ENCODE measurements at regions of chr3 and their contacts with region 1.

Region 1: GRCh38 chr3:48556793-48557626 is at the start of gene PFKFB4:
- DNase-seq: peak; percentile 100
- H3K4me3 Mint-ChIP-seq: peak within 1 kb of the TSS; percentile 84
- H3K27ac Mint-ChIP-seq: peak within 1 kb of the TSS; percentile 50
- H3K4me1 Mint-ChIP-seq: peaks cover 11% of the 10 kb centered on the region
- H3K27me3 Mint-ChIP-seq: no peaks in the 10 kb centered on the region
- total RNA-seq, gene PFKFB4: 5.1 to 5.4 TPM

Region 2: DNA sequence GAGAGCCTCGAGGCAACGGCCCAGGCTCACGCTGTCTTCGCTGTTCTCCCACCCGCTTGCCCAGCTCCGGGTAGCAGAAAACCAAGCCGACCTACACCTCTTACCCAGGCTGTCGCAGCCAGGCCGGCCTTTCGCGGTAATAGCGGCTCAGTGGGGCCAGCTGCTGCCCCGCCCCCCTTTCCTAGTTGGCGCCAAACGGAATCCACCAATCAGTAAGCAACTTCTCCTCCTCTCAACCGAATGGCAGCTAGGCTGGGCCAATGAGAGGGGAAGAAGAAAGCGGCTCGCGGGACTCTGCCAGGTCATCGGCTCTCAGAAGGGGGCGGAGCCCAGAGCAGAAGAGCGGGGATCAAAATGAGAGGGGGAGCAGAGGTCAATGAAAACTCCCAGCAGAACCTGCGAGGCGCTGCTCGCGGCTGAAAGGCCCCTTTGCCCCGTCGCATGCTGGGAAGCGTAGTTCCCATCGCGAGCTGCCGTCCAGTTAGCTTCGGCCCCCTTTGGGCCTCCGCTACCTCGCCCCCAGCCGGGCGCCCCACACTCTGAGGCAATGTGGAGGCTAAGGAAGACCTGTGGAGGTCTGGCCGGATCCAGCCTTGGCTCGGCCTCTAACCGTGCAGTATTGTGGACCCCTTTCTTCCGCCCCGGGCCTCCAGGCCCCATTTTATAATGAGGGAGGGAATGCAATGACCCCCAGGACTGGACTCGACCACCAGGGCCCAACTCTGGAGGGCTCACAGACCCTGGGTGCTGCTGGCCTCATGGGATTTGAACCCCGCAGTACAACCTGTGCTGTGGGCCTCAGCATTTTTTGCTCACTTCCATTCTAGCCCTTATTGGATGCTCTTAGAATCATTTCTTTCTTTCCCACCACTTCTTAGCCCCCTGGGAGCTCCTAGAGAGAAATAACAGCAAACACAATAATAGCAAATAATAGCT is 368.5 kb before region 1 on chr3 and contains the start of gene CDC25A:
- CTCF ChIA-PET with region 1: no interaction called
- intact Hi-C with region 1: loop called (anchors 1 kb)
- DNase-seq: peak; percentile 98
- H3K4me3 Mint-ChIP-seq: peak within 1 kb of the TSS; percentile 88
- H3K27ac Mint-ChIP-seq: peak within 1 kb of the TSS; percentile 61
- H3K4me1 Mint-ChIP-seq: peaks cover 17% of the 10 kb centered on the region
- H3K27me3 Mint-ChIP-seq: peaks cover 11% of the 10 kb centered on the region
- total RNA-seq, gene CDC25A: 40.8 to 41.8 TPM

Region 3: DNA sequence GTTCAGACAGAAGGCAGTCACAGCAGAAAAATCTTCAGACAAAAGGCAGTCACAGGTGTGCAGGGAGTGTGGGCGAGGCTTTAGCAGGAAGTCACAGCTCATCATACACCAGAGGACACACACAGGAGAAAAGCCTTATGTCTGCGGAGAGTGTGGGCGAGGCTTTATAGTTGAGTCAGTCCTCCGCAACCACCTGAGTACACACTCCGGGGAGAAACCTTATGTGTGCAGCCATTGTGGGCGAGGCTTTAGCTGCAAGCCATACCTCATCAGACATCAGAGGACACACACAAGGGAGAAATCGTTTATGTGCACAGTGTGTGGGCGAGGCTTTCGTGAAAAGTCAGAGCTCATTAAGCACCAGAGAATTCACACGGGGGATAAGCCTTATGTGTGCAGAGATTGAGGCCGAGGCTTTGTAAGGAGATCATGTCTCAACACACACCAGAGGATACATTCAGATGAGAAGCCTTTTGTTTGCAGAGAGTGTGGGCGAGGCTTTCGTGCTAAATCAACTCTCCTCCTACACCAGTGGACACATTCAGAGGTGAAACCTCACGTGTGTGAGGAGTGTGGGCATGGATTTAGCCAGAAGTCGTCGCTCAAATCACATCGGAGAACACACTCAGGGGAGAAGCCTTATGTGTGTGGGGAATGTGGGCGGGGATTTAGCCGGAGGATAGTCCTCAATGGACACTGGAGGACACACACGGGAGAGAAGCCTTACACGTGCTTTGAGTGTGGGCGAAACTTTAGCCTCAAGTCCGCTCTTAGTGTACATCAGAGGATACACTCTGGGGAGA is 288.4 kb before region 1 on chr3:
- CTCF ChIA-PET with region 1: interaction called, 3 read pairs
- intact Hi-C with region 1: loop called (anchors 2 kb)
- DNase-seq: peak; percentile 96
- H3K4me3 Mint-ChIP-seq: peak overlapping the region; percentile 37
- H3K27ac Mint-ChIP-seq: peak overlapping the region; percentile 88
- H3K4me1 Mint-ChIP-seq: peaks cover 32% of the 10 kb centered on the region
- H3K27me3 Mint-ChIP-seq: no peaks in the 10 kb centered on the region

Region 4: GRCh38 chr3:48439820-48440589 is 117.0 kb before region 1 on chr3 and contains the starts of genes CCDC51 and TMA7:
- CTCF ChIA-PET with region 1: interaction called, 72 read pairs
- intact Hi-C with region 1: loop called (anchors 2 kb)
- DNase-seq: peak; percentile 100
- H3K4me3 Mint-ChIP-seq: peak within 1 kb of the TSS; percentile 93
- H3K27ac Mint-ChIP-seq: peak within 1 kb of the TSS; percentile 96
- H3K4me1 Mint-ChIP-seq: peaks cover 44% of the 10 kb centered on the region
- H3K27me3 Mint-ChIP-seq: no peaks in the 10 kb centered on the region
- total RNA-seq, gene CCDC51: 16.4 to 17.4 TPM
- total RNA-seq, gene TMA7: 319 to 353 TPM

Region 5: DNA sequence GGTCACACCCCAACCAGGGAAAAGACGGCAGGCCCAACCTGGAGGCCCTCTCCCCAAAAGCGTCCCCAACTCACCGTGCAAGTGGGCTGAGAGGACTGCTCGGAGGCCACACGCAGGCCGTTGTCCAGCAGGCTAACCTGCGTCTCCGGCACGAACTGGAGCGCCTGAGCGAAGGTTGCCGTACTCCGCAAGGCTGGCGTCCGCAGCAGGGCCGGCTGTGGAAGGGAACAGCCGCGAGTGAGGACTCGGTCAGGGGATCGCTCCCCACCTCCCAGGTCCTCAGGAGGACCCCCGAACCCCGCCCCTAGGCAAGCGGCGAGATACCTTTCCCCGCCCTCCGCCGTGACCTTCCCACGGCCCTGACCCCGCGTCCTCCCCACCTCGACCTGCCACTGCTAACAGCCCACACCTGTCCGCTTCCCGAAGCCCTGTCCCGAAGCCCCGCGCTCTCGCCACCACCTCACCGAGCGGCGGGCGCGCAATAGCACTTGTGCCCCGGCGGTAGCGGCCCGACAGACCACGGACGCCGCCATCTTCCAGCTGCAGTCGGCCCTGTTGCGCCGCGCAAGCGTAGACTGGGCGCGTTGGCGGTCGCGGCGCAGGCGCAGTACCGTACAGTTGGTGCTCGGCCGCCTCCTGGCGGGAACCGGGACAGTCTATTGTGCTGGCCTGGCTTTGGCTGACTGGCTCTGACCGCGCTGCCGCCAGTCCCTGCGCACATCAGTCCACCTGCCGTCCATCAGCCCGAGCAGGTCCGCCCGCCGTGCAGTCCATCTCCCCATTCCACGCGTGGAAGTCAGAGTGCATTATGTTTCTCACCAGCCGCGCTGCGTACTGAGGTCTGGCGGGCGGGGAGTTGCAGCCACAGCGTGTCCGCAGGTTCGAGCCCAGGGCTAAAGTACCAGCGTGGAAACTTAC is 52.3 kb after region 1 on chr3 and contains the start of gene UQCRC1:
- CTCF ChIA-PET with region 1: no interaction called
- intact Hi-C with region 1: loop called (anchors 2 kb)
- DNase-seq: peak; percentile 94
- H3K4me3 Mint-ChIP-seq: peak within 1 kb of the TSS; percentile 99
- H3K27ac Mint-ChIP-seq: peak within 1 kb of the TSS; percentile 92
- H3K4me1 Mint-ChIP-seq: peaks cover 23% of the 10 kb centered on the region
- H3K27me3 Mint-ChIP-seq: no peaks in the 10 kb centered on the region
- total RNA-seq, gene UQCRC1: 211 to 232 TPM

Region 6: GRCh38 chr3:48663415-48664312 is 106.7 kb after region 1 on chr3:
- CTCF ChIA-PET with region 1: no interaction called
- intact Hi-C with region 1: loop called (anchors 2 kb)
- DNase-seq: peak; percentile 94
- H3K4me3 Mint-ChIP-seq: peak overlapping the region; percentile 84
- H3K27ac Mint-ChIP-seq: peak overlapping the region; percentile 61
- H3K4me1 Mint-ChIP-seq: peaks cover 17% of the 10 kb centered on the region
- H3K27me3 Mint-ChIP-seq: peaks cover 35% of the 10 kb centered on the region

Region 7: DNA sequence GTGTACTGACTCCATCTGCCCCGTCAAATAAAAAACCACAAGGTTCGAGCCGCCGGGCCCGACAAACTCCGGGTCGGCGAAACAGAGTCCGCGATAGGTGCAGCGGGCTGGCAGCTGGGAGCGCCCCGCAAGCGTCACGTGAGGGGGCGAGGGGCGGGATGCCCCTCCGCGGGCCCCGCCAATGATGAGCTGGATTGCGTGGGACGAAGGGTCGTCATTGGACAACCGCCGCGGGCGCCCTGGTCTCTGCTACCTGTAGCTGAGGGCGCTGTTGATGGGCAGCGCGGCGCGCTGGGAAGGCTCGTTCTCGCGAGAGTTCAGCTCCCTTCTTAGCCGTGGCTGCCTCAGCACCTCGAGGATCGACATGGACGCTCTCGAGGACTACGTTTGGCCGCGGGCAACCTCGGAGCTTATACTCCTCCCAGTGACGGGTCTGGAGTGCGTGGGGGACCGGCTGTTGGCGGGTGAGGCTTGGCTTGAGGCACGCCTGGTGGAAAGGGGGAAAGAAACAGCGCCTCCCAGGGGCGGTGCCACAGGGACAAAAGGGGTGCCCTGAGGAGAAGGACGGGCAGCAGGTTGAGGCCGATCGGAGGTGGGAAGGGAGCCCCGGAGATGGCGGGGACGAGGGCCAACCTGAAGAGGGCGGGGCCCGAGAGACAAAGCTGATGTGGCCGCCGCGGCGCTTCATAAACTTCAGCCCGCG is 450.2 kb after region 1 on chr3 and contains the start of gene WDR6:
- CTCF ChIA-PET with region 1: no interaction called
- intact Hi-C with region 1: loop called (anchors 5 kb)
- DNase-seq: peak; percentile 99
- H3K4me3 Mint-ChIP-seq: peak within 1 kb of the TSS; percentile 99
- H3K27ac Mint-ChIP-seq: peak within 1 kb of the TSS; percentile 99
- H3K4me1 Mint-ChIP-seq: peaks cover 19% of the 10 kb centered on the region
- H3K27me3 Mint-ChIP-seq: no peaks in the 10 kb centered on the region
- total RNA-seq, gene WDR6: 119 to 120 TPM

Measured in activated naive CD4-positive, alpha-beta T cell treated with anti-CD3 and anti-CD28 coated beads for 36 hours (primary cell).